Posterior vena cava (tissue), 2 donors: ENCODE measurements at regions of chr15 and their contacts with region 1.

Region 1: GRCh38 chr15:26873846-26874245 is 7.0 kb downstream of the GABRA5 start:
- DNase-seq: peak; percentile 87

Region 2: DNA sequence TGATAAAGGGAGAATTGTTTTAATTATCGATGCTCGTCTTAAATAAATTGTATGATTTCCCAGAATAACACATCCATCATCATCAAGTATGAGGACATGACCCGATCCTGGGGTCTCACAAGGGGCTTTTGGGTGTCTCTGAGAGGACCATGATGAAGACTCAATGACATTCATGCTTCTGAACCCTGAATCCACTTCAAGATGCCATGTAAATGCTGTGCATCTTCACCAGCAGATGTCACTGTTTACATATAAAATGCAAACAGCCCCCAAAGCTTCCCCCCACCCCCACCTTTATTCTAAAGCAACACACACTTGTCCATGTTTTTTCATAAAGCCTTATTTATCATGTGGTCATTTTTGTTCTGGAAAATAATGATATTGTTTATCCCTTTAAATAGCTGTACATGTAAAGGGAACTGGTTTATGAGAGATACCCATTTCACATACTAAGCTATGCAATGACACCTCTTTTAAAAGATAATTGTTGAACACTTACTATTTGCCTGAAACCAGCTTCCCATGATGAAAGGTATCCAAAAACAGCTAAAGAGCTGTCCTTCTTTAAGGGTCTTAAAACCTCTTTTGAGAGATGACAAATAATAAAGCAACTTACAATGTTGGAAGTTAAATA is 1365.4 kb before region 1 on chr15:
- intact Hi-C with region 1: loop called in 1 of 2 experiments (anchors 10 kb)
- DNase-seq: no peak

Region 3: GRCh38 chr15:26651909-26652308 is 221.9 kb before region 1 on chr15:
- intact Hi-C with region 1: no loop called
- DNase-seq: no peak

Region 4: DNA sequence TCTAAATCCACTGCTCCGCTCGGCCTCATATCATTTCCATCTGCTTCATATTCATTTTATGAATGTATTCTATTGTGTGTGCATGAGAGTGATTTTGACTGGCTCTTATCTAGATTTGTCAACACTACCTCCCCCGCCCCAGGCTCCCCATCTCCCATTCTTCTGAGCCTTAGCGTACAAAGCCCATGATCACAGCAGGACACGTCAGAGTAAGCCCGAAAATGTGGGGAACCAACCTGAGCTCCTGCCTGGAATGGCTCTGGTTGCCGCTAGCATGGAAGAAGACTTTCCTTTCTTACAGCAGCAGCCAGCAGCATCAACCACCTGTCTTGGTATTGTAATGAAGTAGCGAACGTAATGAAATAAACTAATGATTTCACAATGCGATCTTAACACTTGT is 162.4 kb before region 1 on chr15:
- intact Hi-C with region 1: no loop called
- DNase-seq: no peak

Region 5: GRCh38 chr15:27545494-27546255 is 671.8 kb after region 1 on chr15:
- intact Hi-C with region 1: no loop called
- DNase-seq: no peak